Activated CD4-positive, alpha-beta memory T cell treated with anti-CD3 and anti-CD28 coated beads, Interleukin-2, amount 10 ng/mL, durations not matched to agents 7 days and 5 days (primary cell): ENCODE measurements at regions of chr7 and their contacts with region 1.

Region 1: GRCh38 chr7:101138213-101138870 is 11.4 kb downstream of the SERPINE1 start:
- DNase-seq: peak; percentile 87
- H3K4me3 Mint-ChIP-seq: peak overlapping the region; percentile 25
- H3K27ac Mint-ChIP-seq: peak overlapping the region; percentile 60
- H3K4me1 Mint-ChIP-seq: peaks cover 37% of the 10 kb centered on the region
- H3K27me3 Mint-ChIP-seq: peaks cover 44% of the 10 kb centered on the region

Region 2: GRCh38 chr7:101126651-101127280 is 11.6 kb before region 1 on chr7 and contains the start of gene SERPINE1:
- CTCF ChIA-PET with region 1: interaction called, 26 read pairs
- POLR2A ChIA-PET with region 1: interaction called, 3 read pairs
- DNase-seq: peak; percentile 76
- H3K4me3 Mint-ChIP-seq: peak within 1 kb of the TSS; percentile 59
- H3K27ac Mint-ChIP-seq: peak within 1 kb of the TSS; percentile 55
- H3K4me1 Mint-ChIP-seq: peaks cover 51% of the 10 kb centered on the region
- H3K27me3 Mint-ChIP-seq: peaks cover 61% of the 10 kb centered on the region
- total RNA-seq, gene SERPINE1: 0.23 to 0.28 TPM

Region 3: DNA sequence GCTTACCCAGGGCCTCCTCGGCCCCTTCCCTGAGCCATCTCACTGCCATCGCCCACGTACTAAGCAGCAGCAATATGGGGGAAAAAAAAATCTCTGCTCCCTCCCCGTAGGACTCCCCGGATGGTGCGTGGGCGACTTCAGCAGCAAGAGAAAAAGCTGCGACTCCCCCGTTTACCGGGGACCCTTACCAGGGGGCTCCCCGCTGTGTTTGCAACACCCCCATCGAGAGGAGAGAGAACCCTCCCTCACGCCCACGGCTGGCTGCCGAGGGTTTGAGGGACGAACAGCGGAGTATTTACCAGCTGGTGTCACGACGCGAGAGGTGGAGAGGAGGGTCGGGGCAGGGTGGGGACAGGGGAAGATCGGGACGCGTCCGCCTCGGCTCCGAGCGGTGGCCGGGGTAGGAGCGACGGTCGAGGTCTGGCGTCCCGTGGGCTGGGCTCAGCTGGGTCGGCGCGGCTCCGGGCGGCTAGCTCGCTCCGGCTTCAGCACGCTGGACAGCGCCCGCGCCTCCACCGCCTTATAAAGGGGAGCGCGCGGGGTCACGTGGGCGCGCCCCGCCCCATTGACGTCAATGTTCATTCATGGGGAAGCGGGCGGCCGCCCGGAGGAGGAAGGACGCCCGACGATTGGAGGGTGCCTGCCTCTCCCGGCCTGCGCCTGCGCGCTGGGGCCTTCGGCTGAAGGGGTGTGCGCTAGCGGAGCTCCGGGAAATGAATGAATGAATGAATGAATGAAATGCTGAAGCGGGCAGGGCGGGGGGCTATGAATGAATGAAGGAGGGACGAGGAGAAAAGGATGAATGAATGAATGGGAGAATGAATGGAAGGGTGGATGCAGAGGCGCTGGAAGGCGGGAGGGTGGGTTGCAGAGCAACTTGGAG is 27.0 kb after region 1 on chr7 and contains the start of gene VGF:
- CTCF ChIA-PET with region 1: interaction called, 50 read pairs
- POLR2A ChIA-PET with region 1: no interaction called
- DNase-seq: peak; percentile 95
- H3K4me3 Mint-ChIP-seq: peak within 1 kb of the TSS; percentile 65
- H3K27ac Mint-ChIP-seq: peak within 1 kb of the TSS; percentile 14
- H3K4me1 Mint-ChIP-seq: peaks cover 46% of the 10 kb centered on the region
- H3K27me3 Mint-ChIP-seq: peaks cover 62% of the 10 kb centered on the region
- total RNA-seq, gene VGF: 0.30 to 0.33 TPM

Region 4: DNA sequence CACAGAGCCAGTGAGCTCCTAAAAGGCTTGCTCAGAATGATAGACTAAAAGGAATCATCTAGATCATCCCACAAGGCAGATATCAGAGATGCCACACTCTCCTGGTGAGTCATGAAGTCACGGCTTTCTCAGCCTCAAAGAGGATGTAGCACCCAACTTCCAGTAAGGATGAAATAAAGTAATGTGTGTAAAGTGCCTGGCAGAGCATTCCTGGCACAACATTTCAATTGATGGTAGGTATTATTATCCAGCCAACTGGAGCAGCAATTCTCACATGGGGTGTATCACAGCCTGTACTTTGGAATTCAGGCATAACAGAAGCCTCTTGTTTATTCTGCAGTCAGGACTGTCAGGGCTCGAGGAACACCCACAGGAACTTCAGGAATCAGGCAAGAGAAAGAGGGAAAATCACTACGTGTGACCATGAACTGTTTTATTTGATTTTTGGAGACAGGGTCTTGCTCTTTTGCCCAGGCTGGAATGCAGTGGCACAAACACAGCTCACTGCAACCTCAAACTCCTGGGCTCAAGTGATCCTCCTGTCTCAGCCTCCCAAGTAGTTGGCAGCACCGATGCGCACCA is 47.0 kb after region 1 on chr7:
- CTCF ChIA-PET with region 1: interaction called, 208 read pairs
- POLR2A ChIA-PET with region 1: no interaction called
- DNase-seq: no peak
- H3K4me3 Mint-ChIP-seq: no peak overlapping the region
- H3K27ac Mint-ChIP-seq: no peak overlapping the region
- H3K4me1 Mint-ChIP-seq: no peaks in the 10 kb centered on the region
- H3K27me3 Mint-ChIP-seq: peaks cover 34% of the 10 kb centered on the region

Region 5: DNA sequence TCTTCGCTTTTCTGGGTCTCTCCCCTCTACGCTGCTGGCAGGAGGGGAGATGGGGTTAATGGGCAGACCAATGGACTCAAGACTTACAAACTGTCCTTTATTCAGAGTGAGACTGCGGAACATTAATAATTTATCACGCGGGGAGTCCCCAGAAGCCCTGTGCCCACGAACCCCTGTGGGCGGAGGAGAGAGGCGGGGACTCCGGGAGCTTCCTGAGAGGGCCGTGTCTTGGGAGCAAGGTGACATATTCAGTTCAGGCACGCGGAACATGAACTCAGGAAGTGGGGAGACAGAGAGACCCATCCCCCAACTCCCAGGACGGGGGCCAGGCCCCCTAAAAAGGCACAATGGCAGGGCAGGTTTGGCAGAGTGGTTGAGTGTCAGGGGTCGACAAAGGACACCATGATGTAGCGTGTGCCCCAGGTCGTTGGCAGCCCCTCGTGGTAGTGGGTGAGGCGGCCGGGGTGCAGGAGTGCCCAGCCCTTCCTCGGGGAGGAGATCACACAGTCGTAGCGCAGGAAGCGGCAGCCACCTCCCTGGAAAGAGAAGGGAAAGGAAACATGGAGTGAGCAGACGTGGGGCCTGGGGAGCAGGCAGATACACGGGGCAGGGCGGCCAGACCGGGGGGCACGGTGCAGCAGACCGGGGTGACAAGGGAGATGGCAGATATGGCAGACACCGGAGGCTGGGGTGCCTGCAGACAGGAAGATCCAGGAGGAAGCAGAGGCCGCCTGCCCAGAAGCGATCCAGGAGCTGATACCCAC is 67.7 kb after region 1 on chr7:
- CTCF ChIA-PET with region 1: no interaction called
- POLR2A ChIA-PET with region 1: no interaction called
- DNase-seq: no peak
- H3K4me3 Mint-ChIP-seq: no peak overlapping the region
- H3K27ac Mint-ChIP-seq: no peak overlapping the region
- H3K4me1 Mint-ChIP-seq: peaks cover 13% of the 10 kb centered on the region
- H3K27me3 Mint-ChIP-seq: peaks cover 16% of the 10 kb centered on the region

Region 6: DNA sequence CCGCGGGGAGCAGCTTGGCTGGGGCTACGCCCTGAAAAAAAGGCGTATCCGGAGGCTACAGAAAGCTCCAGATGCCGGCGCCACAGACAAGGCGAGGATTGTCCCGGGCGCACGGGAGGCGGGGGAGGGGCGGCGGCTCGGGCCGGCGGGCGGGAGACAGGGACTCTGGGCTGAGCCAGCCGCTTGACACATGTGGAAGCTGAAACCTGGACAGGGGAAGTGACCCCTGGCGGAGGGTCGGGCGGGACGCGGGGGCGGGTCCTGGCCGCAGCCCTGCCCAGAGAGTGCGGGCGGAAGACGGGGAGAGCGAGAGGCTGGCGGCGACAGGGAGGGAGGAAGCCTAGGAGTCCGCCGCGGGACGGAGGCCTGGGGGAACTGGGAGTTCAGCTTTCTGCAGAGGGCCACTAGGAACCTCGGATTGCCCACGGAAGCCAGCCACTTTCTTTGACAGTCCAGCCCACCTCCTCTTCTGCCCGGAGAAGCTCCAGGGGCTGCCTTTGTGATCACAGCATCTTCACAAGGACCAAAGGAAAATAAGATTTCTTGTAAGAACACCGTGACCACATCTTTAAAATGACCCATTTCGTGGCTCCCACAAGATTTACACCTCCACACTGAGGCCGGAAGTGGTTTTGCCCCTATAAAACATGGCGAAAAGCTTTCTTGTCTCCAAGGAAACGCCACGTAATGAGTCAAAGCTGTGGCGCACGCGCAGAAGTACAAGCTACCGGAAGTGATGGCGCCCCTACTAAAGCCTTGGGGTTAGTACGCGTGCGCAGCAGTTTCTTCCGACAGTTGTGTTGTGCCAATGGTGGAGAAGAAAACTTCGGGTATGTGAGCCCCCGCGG is 79.3 kb after region 1 on chr7 and contains the starts of genes PLOD3 and ZNHIT1:
- CTCF ChIA-PET with region 1: interaction called, 24 read pairs
- POLR2A ChIA-PET with region 1: no interaction called
- DNase-seq: peak; percentile 97
- H3K4me3 Mint-ChIP-seq: peak within 1 kb of the TSS; percentile 96
- H3K27ac Mint-ChIP-seq: peak within 1 kb of the TSS; percentile 87
- H3K4me1 Mint-ChIP-seq: peaks cover 35% of the 10 kb centered on the region
- H3K27me3 Mint-ChIP-seq: no peaks in the 10 kb centered on the region
- total RNA-seq, gene PLOD3: 63.3 to 66.6 TPM
- total RNA-seq, gene ZNHIT1: 59.9 to 60.5 TPM

Region 7: DNA sequence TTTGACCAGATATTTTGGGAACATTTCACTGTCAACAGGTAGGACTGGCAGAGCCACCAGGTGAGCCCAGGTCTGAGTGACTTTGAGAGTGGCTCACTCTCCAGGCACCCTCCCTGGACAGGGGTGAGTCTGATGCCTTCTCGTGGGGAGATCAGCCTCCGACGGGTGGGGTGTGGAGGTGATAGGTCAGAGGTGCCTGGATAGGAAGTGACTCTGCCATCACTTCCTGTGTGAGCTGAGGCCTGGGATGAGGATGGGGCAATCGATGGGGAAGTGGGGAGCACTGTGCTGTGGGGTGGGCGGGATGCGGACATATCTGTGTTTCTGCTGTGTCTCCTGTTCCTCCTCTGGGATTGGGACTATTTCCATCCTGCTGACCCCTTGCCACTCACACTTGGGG is 148.7 kb after region 1 on chr7:
- CTCF ChIA-PET with region 1: interaction called, 85 read pairs
- POLR2A ChIA-PET with region 1: no interaction called
- DNase-seq: no peak
- H3K4me3 Mint-ChIP-seq: no peak overlapping the region
- H3K27ac Mint-ChIP-seq: no peak overlapping the region
- H3K4me1 Mint-ChIP-seq: peaks cover 27% of the 10 kb centered on the region
- H3K27me3 Mint-ChIP-seq: peaks cover 12% of the 10 kb centered on the region